Gastrocnemius medialis (tissue), 4 donors: ENCODE measurements at regions of chr17 and their contacts with region 1.

Region 1: GRCh38 chr17:69523244-69523861 is 108.9 kb downstream of the MAP2K6 start:
- DNase-seq: peak in 1 of 2 donors; percentile 41
- ATAC-seq: peak; percentile 65 to 69
- H3K4me3 ChIP-seq: peak overlapping the region in 1 of 4 donors; percentile 26
- H3K27ac ChIP-seq: peak overlapping the region; percentile 76 to 85 (median 79)
- H3K4me1 ChIP-seq: peaks cover 34 to 36% of the 10 kb centered on the region in 2 donors
- H3K27me3 ChIP-seq: no peaks in the 10 kb centered on the region
- CTCF ChIP-seq: peak; percentile 74 to 83 (median 79)
- POLR2A ChIP-seq: no peak

Region 2: DNA sequence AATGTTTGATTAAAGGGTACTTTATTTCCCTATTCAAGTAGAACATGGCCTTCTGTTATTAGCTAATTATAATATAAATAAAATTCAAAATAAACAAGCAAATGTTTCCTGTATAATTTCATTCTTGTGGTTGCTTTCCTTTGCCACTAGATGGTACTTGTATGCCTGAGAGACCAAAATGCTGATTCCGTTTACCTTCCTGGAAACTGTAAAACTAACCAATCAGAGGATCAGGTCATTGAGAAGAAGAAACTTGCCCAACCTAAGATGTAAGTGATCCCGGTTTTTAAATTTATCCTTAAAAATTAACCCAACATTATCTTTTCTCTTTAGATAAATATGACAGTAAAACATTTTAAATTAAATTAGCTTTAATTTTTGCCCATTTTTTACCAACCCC is 188.3 kb before region 1 on chr17:
- in situ Hi-C with region 1: loop called in 3 of 4 experiments (anchors 5 to 10 kb)
- intact Hi-C with region 1: no loop called
- DNase-seq: no peak
- ATAC-seq: peak; percentile 50 to 80
- H3K4me3 ChIP-seq: peak overlapping the region in 2 of 4 donors; percentile 22 to 27
- H3K27ac ChIP-seq: peak overlapping the region in 3 of 4 donors; percentile 60 to 97 (median 90)
- H3K4me1 ChIP-seq: peaks cover 0 to 17% of the 10 kb centered on the region in 2 donors
- H3K27me3 ChIP-seq: no peaks in the 10 kb centered on the region
- CTCF ChIP-seq: peak; percentile 66 to 82 (median 71)
- POLR2A ChIP-seq: no peak

Region 3: GRCh38 chr17:69567130-69567529 is 43.8 kb after region 1 on chr17:
- in situ Hi-C with region 1: no loop called
- intact Hi-C with region 1: loop called (anchors 5 kb)
- DNase-seq: no peak
- ATAC-seq: no peak
- H3K4me3 ChIP-seq: no peak overlapping the region
- H3K27ac ChIP-seq: no peak overlapping the region
- H3K4me1 ChIP-seq: peaks cover 3 to 5% of the 10 kb centered on the region in 2 donors
- H3K27me3 ChIP-seq: no peaks in the 10 kb centered on the region
- CTCF ChIP-seq: no peak
- POLR2A ChIP-seq: no peak

Region 4: GRCh38 chr17:70552230-70552981 is 1029.1 kb after region 1 on chr17:
- in situ Hi-C with region 1: no loop called
- intact Hi-C with region 1: loop called (anchors 5 kb)
- DNase-seq: peak in 1 of 2 donors; percentile 3
- ATAC-seq: peak in 1 of 2 donors; percentile 73
- H3K4me3 ChIP-seq: no peak overlapping the region
- H3K27ac ChIP-seq: no peak overlapping the region
- H3K4me1 ChIP-seq: no peaks in the 10 kb centered on the region
- H3K27me3 ChIP-seq: no peaks in the 10 kb centered on the region
- CTCF ChIP-seq: peak in 4 of 5 experiments; percentile 50 to 62 (median 58)
- POLR2A ChIP-seq: no peak